HepG2 (cell line): ENCODE measurements at regions of chr10 and their contacts with region 1.

Region 1: GRCh38 chr10:51960494-51960895 is 261.1 kb upstream of the CSTF2T start:
- DNase-seq: peak; percentile 3
- ATAC-seq: peak; percentile 56; the same call in 2 of the 3 replicates
- H3K4me3 ChIP-seq: no peak overlapping the region
- H3K27ac ChIP-seq: no peak overlapping the region
- H3K4me1 ChIP-seq: no peaks in the 10 kb centered on the region
- H3K27me3 ChIP-seq: no peaks in the 10 kb centered on the region
- CTCF ChIP-seq: peak; percentile 54
- EP300 ChIP-seq: no peak
- POLR2A ChIP-seq: no peak
- RAD21 ChIP-seq: no peak

Region 2: DNA sequence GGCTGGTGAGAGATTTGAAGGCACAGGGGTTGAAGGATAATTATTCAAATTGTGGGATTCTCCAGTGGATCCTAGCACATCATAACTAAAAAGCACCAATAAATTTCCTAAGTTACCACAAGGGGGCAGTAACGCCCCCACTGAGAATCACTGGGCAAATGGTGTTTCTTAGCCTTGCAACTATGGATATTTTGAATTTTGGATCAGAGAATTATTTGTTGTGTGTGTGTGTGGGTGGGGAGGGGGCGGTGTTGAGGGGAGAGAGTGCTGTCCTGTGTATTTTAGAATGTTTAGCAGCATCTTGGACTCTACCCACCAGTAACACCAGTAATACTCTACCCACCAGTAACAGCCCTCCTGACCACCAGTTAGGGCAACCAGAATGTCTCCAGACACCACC is 949.5 kb before region 1 on chr10:
- CTCF ChIA-PET with region 1: no interaction called
- POLR2A ChIA-PET with region 1: no interaction called
- in situ Hi-C with region 1: no loop called
- intact Hi-C with region 1: loop called (anchors 5 kb)
- DNase-seq: peak; percentile 27
- ATAC-seq: peak; percentile 64; the same call in 2 of the 3 replicates
- H3K4me3 ChIP-seq: no peak overlapping the region
- H3K27ac ChIP-seq: no peak overlapping the region
- H3K4me1 ChIP-seq: no peaks in the 10 kb centered on the region
- H3K27me3 ChIP-seq: peaks cover 0 to under 1% of the 10 kb centered on the region in 2 experiments; a peak in 2 of 5 replicates
- CTCF ChIP-seq: peak; percentile 66
- EP300 ChIP-seq: no peak
- POLR2A ChIP-seq: no peak
- RAD21 ChIP-seq: no peak

Region 3: GRCh38 chr10:51063659-51064535 is 896.6 kb before region 1 on chr10:
- CTCF ChIA-PET with region 1: interaction called, 8 read pairs
- POLR2A ChIA-PET with region 1: no interaction called
- in situ Hi-C with region 1: loop called (anchors 25 kb)
- intact Hi-C with region 1: loop called (anchors 1 kb)
- DNase-seq: peak; percentile 7
- ATAC-seq: peak; percentile 52; the same call in 2 of the 3 replicates
- H3K4me3 ChIP-seq: no peak overlapping the region
- H3K27ac ChIP-seq: no peak overlapping the region
- H3K4me1 ChIP-seq: no peaks in the 10 kb centered on the region
- H3K27me3 ChIP-seq: no peaks in the 10 kb centered on the region
- CTCF ChIP-seq: peak; percentile 52
- EP300 ChIP-seq: no peak
- POLR2A ChIP-seq: no peak
- RAD21 ChIP-seq: 0 out of 2 replicates have a peak, but pooled peaks have one; percentile 16

Region 4: DNA sequence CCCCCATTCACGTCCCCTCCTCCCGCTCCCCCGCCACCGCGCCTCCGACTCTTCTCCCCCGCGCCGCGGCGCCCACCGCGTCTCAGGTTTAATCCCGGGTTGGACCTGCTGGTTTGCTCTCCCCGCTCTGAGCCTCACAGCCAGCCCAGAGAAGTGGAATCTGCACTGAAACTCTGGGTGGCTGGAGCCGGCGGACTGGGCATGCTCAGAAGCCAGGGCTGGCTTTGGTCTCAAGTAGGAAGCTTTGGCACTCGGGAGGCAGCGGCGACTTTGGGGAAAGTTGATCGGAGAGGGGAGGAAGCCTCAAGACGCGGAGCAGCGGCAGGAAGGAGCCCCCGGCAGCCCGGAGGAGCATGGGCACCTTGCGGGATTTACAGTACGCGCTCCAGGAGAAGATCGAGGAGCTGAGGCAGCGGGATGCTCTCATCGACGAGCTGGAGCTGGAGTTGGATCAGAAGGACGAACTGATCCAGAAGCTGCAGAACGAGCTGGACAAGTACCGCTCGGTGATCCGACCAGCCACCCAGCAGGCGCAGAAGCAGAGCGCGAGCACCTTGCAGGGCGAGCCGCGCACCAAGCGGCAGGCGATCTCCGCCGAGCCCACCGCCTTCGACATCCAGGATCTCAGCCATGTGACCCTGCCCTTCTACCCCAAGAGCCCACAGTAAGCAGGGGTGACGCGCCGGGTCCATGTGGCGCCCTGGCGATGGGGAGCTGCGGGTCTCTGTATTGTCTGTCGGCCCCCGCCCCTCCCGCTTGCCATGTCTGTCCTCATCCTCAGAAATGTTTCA is 886.1 kb before region 1 on chr10 and contains the start of gene PRKG1:
- CTCF ChIA-PET with region 1: no interaction called
- POLR2A ChIA-PET with region 1: no interaction called
- in situ Hi-C with region 1: loop called (anchors 25 kb)
- intact Hi-C with region 1: no loop called
- DNase-seq: peak; percentile 5
- ATAC-seq: peak; percentile 97
- H3K4me3 ChIP-seq: peak within 1 kb of the TSS; percentile 20 to 52 (median 40); a peak in 4 of 6 replicates
- H3K27ac ChIP-seq: no peak within 1 kb of the TSS
- H3K4me1 ChIP-seq: peaks cover 9% of the 10 kb centered on the region; the same call in 1 of the 2 replicates
- H3K27me3 ChIP-seq: peaks cover 3 to 30% of the 10 kb centered on the region in 2 experiments; a peak in 3 of 5 replicates
- CTCF ChIP-seq: no peak
- EP300 ChIP-seq: no peak
- POLR2A ChIP-seq: no peak
- RAD21 ChIP-seq: no peak
- total RNA-seq, gene PRKG1: not detected in 2 replicates

Region 5: GRCh38 chr10:51389415-51390321 is 570.8 kb before region 1 on chr10:
- CTCF ChIA-PET with region 1: interaction called, 9 read pairs
- POLR2A ChIA-PET with region 1: no interaction called
- in situ Hi-C with region 1: loop called (anchors 10 kb)
- intact Hi-C with region 1: loop called (anchors 1 kb)
- DNase-seq: peak; percentile 32
- ATAC-seq: peak; percentile 91
- H3K4me3 ChIP-seq: no peak overlapping the region
- H3K27ac ChIP-seq: no peak overlapping the region
- H3K4me1 ChIP-seq: no peaks in the 10 kb centered on the region
- H3K27me3 ChIP-seq: no peaks in the 10 kb centered on the region
- CTCF ChIP-seq: peak; percentile 77
- EP300 ChIP-seq: no peak
- POLR2A ChIP-seq: no peak
- RAD21 ChIP-seq: peak; percentile 57